Panc1 (cell line): ENCODE measurements at regions of chr7 and their contacts with region 1.

Region 1: DNA sequence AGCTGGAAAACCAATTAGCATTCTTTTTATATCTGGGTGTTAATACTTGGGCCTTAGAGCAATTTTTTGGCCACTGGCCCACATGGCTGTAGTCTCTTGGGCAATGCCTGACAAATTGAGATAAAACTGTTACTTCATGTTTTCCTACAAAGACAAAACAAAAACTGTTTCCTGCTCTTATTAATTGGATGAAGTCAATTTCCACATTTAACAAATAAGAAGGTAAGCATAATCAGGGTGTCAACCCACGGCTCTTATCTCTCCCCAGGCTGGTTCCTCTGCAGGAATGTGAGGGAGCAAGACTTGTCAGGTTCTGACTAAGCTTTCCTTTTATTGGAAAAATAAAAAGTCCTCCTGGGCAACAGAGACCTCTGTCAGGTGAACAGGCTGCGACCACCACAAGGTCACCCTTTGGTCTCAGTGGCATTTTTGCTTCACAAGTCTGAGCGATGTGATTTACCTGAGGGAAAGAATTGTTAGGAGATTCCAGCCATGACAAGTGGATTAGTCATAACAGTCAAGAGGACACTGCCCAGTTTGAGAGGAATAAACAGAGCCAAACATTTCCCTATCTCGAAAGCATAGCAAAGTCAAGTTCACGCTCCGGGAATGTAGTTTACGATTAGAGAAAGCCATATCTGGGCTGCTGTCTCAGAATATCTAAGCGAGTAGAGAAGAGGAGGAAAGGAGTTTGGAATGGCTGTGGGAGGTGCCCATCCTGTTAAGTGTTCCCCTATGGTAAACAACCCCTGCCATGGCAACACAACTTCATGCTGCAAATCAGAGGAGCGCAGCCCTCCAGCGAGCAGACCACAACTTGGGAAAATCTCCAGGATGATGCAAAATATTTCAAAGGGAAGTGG is 144.4 kb downstream of the TES start:
- DNase-seq: peak; percentile 98
- ATAC-seq: peak; percentile 92
- H3K4me3 ChIP-seq: peak overlapping the region; percentile 12 to 49
- H3K27ac ChIP-seq: peak overlapping the region; percentile 100
- H3K4me1 ChIP-seq: peaks cover 49% of the 10 kb centered on the region
- H3K27me3 ChIP-seq: no peaks in the 10 kb centered on the region
- CTCF ChIP-seq: no peak

Region 2: GRCh38 chr7:116443101-116443523 is 88.3 kb after region 1 on chr7:
- CTCF ChIA-PET with region 1: no interaction called
- POLR2A ChIA-PET with region 1: no interaction called
- in situ Hi-C with region 1: no loop called
- intact Hi-C with region 1: loop called (anchors 5 kb)
- DNase-seq: peak; percentile 95
- ATAC-seq: peak; percentile 94
- H3K4me3 ChIP-seq: no peak overlapping the region
- H3K27ac ChIP-seq: peak overlapping the region; percentile 96
- H3K4me1 ChIP-seq: peaks cover 23% of the 10 kb centered on the region
- H3K27me3 ChIP-seq: no peaks in the 10 kb centered on the region
- CTCF ChIP-seq: no peak